Esophagus squamous epithelium (tissue), 5 donors: ENCODE measurements at regions of chr5 and their contacts with region 1.

Region 1: DNA sequence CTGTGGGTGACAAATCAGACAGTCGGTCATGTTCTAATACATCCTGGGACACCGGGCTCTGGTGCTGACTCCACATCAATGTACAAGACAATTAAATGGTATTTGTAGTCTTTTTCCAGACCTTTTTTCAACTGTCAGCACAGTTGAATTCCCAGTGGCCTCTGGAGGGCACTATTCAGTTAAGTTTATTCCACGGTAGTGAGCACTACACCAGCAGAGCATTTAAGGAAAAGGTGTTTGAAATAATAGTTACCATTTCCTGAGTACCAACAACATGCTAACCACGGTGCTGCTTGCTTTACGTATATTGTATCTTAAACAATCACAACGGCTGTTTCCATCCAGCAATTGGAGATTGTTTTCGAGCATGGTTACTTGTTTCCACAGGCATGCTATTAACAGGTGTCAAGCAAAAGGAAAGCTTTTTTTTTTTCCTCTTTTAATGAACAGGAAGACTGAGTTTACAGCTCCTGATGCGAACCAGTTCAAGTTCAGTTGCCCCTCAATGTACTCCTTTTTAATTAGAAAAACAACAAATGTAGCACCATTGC is 186.7 kb downstream of the PDZD2 start:
- DNase-seq: no peak
- H3K4me3 ChIP-seq: no peak overlapping the region
- H3K27ac ChIP-seq: no peak overlapping the region
- H3K4me1 ChIP-seq: peaks cover 0 to 5% (median 0%) of the 10 kb centered on the region in 3 donors
- H3K27me3 ChIP-seq: no peaks in the 10 kb centered on the region
- CTCF ChIP-seq: peak; percentile 47 to 83 (median 68)
- POLR2A ChIP-seq: no peak

Region 2: DNA sequence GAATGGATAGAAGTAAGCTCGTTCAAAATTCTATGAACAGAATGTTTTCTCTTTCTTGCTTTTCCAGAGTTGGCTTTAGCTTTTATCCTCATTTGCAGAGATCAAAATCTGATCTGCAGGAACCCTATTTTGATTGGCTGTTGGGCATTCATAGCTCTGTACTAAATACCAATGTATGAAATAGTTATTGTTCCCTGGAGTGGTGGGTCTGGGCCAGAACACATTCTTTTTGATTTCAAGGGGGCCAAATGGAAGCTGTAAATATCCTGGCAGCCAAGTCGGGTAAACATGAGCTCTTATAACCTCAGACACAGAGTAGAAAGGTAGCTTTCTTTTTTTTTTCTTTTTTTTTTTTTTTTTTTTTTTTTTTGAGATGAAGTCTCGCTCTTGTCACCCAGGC is 54.9 kb after region 1 on chr5:
- intact Hi-C with region 1: no loop called
- DNase-seq: no peak
- H3K4me3 ChIP-seq: no peak overlapping the region
- H3K27ac ChIP-seq: no peak overlapping the region
- H3K4me1 ChIP-seq: peaks cover 0 to under 1% (median 0%) of the 10 kb centered on the region in 3 donors
- H3K27me3 ChIP-seq: no peaks in the 10 kb centered on the region
- CTCF ChIP-seq: no peak
- POLR2A ChIP-seq: no peak

Region 3: DNA sequence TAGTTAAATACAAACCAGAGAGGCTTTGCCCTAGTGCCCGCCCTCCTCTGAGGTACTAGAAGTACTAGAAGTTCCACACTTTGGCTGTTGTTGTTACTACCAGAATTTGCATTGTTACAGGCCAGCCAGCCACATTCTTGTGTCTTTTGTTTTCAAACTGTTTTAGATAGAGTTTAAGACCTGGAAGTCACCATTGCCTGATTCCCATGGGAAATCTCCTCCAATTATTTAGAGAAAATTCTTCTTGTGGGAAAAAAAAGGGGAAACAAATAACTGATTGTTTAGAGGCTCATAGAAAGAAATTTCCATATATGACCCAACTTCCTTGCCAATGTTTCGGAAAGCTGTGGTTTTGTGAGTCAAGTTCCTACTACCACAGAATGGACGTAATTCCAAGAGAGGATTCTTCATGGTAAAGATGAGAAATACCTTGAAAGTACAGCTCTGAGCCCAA is 96.3 kb after region 1 on chr5:
- intact Hi-C with region 1: no loop called
- DNase-seq: no peak
- H3K4me3 ChIP-seq: no peak overlapping the region
- H3K27ac ChIP-seq: no peak overlapping the region
- H3K4me1 ChIP-seq: peaks cover 0 to 21% (median under 1%) of the 10 kb centered on the region in 3 donors
- H3K27me3 ChIP-seq: no peaks in the 10 kb centered on the region
- CTCF ChIP-seq: no peak
- POLR2A ChIP-seq: no peak

Region 4: DNA sequence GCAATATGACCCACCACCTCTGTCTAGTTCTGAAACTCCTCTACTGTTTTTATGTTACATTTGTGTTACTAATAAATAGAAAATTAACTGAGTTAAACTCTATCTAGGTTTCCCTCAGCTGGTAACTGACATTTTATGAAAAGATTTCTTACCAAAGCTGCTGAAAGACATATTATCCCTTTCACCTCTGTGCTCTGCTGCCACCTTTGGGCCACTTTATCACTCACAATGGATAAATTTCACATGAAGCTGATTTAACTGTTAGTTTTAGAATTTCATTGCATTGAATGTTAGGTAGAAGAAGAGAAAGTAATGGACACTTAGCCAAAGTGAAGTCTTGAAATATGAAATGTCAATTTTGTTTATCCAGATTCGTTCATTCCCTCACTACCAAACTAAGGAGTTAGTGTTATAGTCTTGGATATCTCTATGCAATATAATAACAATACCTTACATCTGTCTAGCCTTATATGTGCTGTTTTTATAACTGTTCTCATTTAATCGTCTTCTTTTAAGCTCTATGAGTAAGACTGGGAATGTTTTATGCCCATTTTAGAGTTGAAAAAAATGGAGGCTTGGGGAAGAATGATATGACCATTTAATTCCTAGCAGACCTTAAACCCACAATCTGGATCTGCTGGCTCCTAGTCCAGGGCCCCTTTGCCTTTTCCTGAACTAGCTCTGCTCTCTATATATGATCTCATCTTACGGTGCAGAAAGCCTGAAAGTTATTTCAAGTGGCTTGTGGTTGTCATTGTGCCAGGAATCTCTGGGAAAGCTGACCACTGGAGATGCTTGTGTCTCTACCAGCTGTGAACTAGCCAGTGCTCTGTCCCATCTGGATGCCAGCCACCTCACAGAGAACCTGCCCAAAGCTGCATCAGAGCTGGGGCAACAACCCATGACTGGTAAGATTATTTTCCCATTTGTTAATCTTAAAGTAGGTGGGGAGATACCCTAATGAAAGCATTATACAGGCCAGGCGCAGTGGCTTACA is 251.4 kb after region 1 on chr5:
- intact Hi-C with region 1: loop called (anchors 5 kb)
- DNase-seq: no peak
- H3K4me3 ChIP-seq: no peak overlapping the region
- H3K27ac ChIP-seq: no peak overlapping the region
- H3K4me1 ChIP-seq: no peaks in the 10 kb centered on the region
- H3K27me3 ChIP-seq: no peaks in the 10 kb centered on the region
- CTCF ChIP-seq: peak; percentile 45 to 86 (median 73)
- POLR2A ChIP-seq: no peak

Region 5: DNA sequence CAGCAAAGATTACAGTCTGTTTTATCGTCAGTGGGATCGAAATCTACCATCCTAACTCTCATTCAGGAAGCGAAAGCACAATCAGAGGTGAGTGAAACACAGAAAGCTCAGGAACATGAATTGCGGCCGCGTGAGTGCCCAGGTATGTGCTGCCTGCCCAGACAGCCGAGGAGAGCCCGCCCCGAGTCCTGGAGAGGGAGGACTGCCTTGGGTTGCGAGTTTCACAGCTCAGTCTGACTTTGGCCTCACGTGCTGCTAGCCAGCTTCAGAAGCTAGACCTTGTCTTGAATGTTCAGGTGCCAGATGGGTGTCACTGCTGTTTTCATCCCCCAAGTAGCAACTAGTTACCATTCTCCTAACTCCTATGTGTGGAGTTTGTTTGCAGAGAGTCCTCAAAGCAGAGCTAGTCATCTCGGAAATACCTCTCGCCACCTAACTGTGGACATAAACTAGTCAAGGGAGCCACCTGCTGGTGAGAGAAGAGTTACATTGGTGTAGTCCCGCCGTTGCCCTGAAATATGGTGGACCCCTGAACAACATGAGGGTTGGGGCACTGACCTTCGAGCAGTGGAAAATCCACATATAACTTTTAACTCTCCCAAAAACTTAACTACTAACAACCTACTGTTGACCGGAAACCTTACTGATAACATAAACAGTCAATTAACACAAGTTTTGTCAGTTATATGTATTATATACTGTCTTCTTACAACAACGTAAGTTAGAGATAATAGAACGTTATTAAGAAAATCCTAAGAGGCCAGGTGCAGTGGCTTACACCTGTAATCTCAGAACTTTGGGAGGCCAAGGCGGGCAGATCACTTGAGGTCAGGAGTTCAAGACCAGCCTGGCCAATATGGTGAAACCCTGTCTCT is 267.6 kb after region 1 on chr5:
- intact Hi-C with region 1: loop called (anchors 5 kb)
- DNase-seq: no peak
- H3K4me3 ChIP-seq: no peak overlapping the region
- H3K27ac ChIP-seq: no peak overlapping the region
- H3K4me1 ChIP-seq: peaks cover 0 to 4% (median 0%) of the 10 kb centered on the region in 3 donors
- H3K27me3 ChIP-seq: no peaks in the 10 kb centered on the region
- CTCF ChIP-seq: peak; percentile 20 to 81 (median 74)
- POLR2A ChIP-seq: no peak